GM12878 (cell line): ENCODE measurements at regions of chr3 and their contacts with region 1.

Region 1: DNA sequence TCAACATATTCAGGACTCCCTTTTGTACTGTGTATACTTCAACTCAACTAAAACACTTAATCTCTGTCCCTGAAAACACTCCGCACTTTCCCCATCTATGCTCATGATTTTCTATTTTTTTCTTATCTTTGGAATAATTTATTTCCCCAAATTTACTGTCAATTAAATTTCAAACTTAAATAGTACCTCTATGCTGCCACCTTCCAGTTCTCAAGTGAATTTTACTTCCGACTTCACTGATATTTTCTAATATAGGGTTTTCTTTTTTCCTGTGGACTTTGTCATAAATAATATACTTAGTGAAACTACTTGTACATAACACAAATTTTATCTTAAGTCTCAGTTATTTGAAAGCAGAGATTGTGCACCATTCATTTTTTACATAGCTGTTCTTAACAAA is 1303.3 kb downstream of the OTOL1 start:
- DNase-seq: no peak
- ATAC-seq: no peak
- H3K4me3 ChIP-seq: no peak overlapping the region
- H3K27ac ChIP-seq: no peak overlapping the region
- H3K4me1 ChIP-seq: no peaks in the 10 kb centered on the region
- H3K27me3 ChIP-seq: no peaks in the 10 kb centered on the region
- CTCF ChIP-seq: no peak
- EP300 ChIP-seq: no peak
- POLR2A ChIP-seq: no peak
- RAD21 ChIP-seq: no peak

Region 2: DNA sequence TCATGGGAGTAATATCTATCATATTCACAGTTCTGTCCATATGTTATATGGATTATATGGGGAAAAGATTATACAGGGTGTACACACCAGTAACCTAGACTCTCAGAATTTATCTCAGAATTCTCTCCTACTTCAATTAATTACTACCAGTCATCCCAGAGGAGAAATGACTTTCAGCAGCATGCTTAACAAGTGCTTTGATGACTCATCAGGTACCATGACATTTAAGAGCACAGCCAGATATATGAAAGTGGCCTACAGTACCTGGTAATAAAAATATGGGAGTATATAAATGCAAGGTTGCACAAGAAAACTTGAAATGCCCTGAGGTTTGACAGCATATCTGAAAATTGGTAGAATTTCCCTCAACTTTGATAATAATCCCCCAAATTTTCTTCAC is 30.4 kb before region 1 on chr3:
- CTCF ChIA-PET with region 1: no interaction called
- POLR2A ChIA-PET with region 1: no interaction called
- RAD21 ChIA-PET with region 1: no interaction called
- SMC1A ChIA-PET with region 1: no interaction called
- in situ Hi-C with region 1: no loop called
- intact Hi-C with region 1: no loop called
- DNase-seq: no peak
- ATAC-seq: no peak
- H3K4me3 ChIP-seq: no peak overlapping the region
- H3K27ac ChIP-seq: no peak overlapping the region
- H3K4me1 ChIP-seq: no peaks in the 10 kb centered on the region
- H3K27me3 ChIP-seq: no peaks in the 10 kb centered on the region
- CTCF ChIP-seq: no peak
- EP300 ChIP-seq: no peak
- POLR2A ChIP-seq: no peak
- RAD21 ChIP-seq: no peak

Region 3: DNA sequence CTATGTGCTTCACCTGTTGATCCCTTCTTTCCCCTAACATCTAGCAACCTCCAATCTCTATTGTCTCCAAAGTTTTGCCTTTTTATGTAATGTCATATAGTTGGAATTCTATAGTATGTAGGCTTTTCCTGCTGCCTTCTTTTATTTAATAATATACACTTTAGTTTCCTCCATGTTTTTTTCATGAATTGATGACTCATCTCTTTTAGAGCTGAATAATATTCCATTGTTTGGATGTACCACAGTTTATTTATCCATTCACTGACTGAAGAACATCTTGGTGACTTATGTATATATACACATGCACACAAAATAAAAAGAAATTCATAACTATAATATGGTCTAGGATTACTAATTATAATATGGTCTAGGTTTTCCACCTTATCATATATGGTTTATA is 10.9 kb after region 1 on chr3:
- CTCF ChIA-PET with region 1: no interaction called
- POLR2A ChIA-PET with region 1: no interaction called
- RAD21 ChIA-PET with region 1: no interaction called
- SMC1A ChIA-PET with region 1: no interaction called
- in situ Hi-C with region 1: no loop called
- intact Hi-C with region 1: no loop called
- DNase-seq: no peak
- ATAC-seq: no peak
- H3K4me3 ChIP-seq: no peak overlapping the region
- H3K27ac ChIP-seq: no peak overlapping the region
- H3K4me1 ChIP-seq: no peaks in the 10 kb centered on the region
- H3K27me3 ChIP-seq: no peaks in the 10 kb centered on the region
- CTCF ChIP-seq: no peak
- EP300 ChIP-seq: no peak
- POLR2A ChIP-seq: no peak
- RAD21 ChIP-seq: no peak

Region 4: DNA sequence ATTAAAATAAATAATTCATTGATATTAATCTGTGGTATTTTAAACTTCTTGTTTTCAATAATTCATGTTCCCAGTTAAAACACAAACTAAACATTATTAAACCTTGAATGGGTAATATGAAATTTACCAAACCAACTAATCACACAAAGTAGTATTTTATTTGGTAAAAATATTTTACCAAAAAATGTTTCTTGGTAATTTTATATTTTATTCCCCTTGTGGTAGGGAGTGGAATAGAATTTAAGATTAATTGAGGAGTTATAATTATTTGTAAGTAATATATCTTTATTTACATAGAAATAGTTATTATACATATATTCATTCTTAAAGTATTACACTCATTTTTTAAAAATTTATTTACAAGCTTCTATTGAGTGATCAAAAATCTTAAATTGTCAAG is 47.6 kb after region 1 on chr3:
- CTCF ChIA-PET with region 1: no interaction called
- POLR2A ChIA-PET with region 1: no interaction called
- RAD21 ChIA-PET with region 1: no interaction called
- SMC1A ChIA-PET with region 1: no interaction called
- in situ Hi-C with region 1: no loop called
- intact Hi-C with region 1: loop called (anchors 10 kb)
- DNase-seq: no peak
- ATAC-seq: no peak
- H3K4me3 ChIP-seq: no peak overlapping the region
- H3K27ac ChIP-seq: no peak overlapping the region
- H3K4me1 ChIP-seq: no peaks in the 10 kb centered on the region
- H3K27me3 ChIP-seq: no peaks in the 10 kb centered on the region
- CTCF ChIP-seq: no peak
- EP300 ChIP-seq: no peak
- POLR2A ChIP-seq: no peak
- RAD21 ChIP-seq: no peak